ENCODE measurements at regions of chr7 and their contacts with region 1.

Region 1: DNA sequence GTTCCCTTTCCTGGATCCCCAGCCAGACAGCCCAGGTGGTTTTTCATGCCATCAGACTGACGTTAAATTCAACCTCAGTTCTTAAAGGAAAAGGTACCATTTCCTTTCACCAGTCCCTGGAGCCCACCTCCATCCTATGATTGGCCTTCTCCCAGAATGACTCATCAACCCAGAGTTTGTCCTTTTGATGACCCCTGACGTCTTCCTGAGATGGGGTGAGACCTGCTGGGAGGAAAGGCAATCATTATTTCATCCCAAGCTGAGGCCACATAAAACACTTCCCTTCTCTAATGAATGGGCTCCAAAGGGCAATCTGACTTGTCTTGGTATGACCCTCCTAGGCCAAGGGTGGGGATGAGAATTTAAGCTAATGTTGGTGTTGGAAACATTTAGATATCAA is 750.7 kb downstream of the SUGCT start:
- DNase-seq: no peak
- ATAC-seq: peak; percentile 58

Region 2: GRCh38 chr7:40489844-40490602 is 395.5 kb before region 1 on chr7:
- intact Hi-C with region 1: loop called (anchors 5 kb)
- DNase-seq: no peak
- ATAC-seq: no peak

Region 3: GRCh38 chr7:40777748-40778312 is 107.7 kb before region 1 on chr7:
- intact Hi-C with region 1: no loop called
- DNase-seq: no peak
- ATAC-seq: no peak